ENCODE measurements at regions of chr4 and their contacts with region 1.

Region 1: DNA sequence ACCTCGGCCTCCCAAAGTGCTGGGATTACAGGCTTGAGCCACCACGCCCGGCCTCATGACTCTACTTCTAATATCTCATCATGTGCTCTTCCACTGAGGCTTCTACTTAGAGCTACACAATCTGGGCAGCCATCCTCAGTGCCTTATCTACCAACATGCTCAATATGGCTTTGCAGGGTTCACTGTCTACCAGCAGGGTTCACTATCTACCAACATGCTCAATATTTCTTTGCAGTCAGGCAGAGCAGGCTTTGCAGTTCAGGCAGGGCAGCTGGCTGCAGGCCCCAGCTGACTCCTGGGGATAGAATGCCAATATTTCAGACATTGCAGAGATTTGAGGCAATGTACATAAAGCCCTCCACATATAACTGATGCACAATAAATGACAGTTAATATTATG is 47.5 kb downstream of the PKD2 start:
- DNase-seq: peak; percentile 70
- ATAC-seq: peak; percentile 100
- H3K4me3 ChIP-seq: no peak overlapping the region
- H3K27ac ChIP-seq: no peak overlapping the region
- H3K4me1 ChIP-seq: peaks cover 6% of the 10 kb centered on the region
- H3K27me3 ChIP-seq: no peaks in the 10 kb centered on the region
- CTCF ChIP-seq: peak; percentile 93
- EP300 ChIP-seq: no peak
- POLR2A ChIP-seq: no peak
- RAD21 ChIP-seq: peak; percentile 95

Region 2: DNA sequence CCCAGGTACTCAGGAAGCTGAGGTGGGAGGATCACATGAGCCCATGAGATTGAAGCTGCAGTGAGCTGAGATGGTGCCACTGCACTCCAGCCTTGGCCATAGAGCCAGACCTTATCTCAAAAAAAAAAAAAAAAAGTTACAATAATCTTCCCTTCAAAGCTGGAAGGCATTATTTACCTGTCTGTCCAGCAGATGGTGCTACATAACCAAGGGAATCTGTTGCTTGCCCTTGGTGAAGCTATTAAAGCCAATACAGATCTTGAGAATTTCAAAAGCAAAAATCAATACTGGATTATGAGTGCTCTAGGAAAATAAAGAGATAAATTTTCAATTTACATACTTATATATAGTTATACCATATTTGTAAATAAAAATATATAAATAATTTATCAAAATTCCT is 21.6 kb before region 1 on chr4:
- CTCF ChIA-PET with region 1: no interaction called
- POLR2A ChIA-PET with region 1: no interaction called
- in situ Hi-C with region 1: no loop called
- intact Hi-C with region 1: loop called (anchors 1 kb)
- DNase-seq: peak; percentile 71
- ATAC-seq: peak; percentile 61
- H3K4me3 ChIP-seq: no peak overlapping the region
- H3K27ac ChIP-seq: no peak overlapping the region
- H3K4me1 ChIP-seq: no peaks in the 10 kb centered on the region
- H3K27me3 ChIP-seq: no peaks in the 10 kb centered on the region
- CTCF ChIP-seq: peak; percentile 73
- EP300 ChIP-seq: no peak
- POLR2A ChIP-seq: no peak
- RAD21 ChIP-seq: peak; percentile 69; the same call in 1 of the 2 replicates

Region 3: DNA sequence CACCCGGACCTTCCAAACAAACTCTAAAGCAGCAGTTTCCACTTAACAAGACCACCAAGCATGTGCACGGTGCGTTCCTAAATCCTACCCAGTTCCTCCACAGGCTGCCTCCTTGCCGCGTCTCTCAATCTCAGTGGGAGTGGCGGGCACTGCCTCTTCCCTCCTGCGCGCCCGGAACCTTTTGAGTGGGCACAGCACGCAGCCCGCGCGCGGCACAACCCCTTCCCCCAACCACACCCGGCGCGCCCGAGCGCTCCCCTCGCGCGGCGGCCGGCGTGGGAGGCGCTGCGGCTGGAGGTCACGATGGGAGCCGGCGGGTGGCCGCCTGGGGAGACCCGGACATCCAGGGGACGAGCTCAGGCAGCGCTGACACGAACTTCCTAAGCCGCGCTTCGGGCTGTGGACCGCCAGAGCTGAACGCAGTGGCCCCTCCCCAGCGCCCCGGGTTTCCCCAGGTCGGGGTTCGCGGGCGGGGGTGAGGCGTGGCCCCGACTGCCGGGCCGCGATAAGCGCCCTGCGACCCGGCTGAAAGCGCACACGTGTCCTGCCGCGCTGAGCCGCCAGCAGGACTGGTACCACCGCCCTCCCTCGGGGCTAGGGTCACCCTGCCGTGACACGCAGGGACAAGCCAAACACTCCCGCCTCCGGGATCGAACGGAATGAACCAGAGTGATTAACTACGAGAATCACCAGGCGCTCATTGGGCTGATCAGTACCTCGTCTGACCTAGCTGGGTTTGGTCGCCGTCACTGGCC is 103.8 kb after region 1 on chr4 and contains the start of gene ABCG2:
- CTCF ChIA-PET with region 1: no interaction called
- POLR2A ChIA-PET with region 1: no interaction called
- in situ Hi-C with region 1: no loop called
- intact Hi-C with region 1: loop called (anchors 2 kb)
- DNase-seq: peak; percentile 44
- ATAC-seq: peak; percentile 88
- H3K4me3 ChIP-seq: peak within 1 kb of the TSS; percentile 49 to 82 (median 75)
- H3K27ac ChIP-seq: peak within 1 kb of the TSS; percentile 67
- H3K4me1 ChIP-seq: peaks cover 36% of the 10 kb centered on the region
- H3K27me3 ChIP-seq: no peaks in the 10 kb centered on the region
- CTCF ChIP-seq: no peak
- EP300 ChIP-seq: no peak
- POLR2A ChIP-seq: peak; percentile 42 to 45; a peak in 2 of 4 replicates
- RAD21 ChIP-seq: peak; percentile 14; the same call in 1 of the 2 replicates
- total RNA-seq, gene ABCG2: 13.2 and 15.7 TPM in 2 replicates

Region 4: GRCh38 chr4:89572224-89572858 is 1517.4 kb after region 1 on chr4:
- CTCF ChIA-PET with region 1: no interaction called
- POLR2A ChIA-PET with region 1: no interaction called
- in situ Hi-C with region 1: no loop called
- intact Hi-C with region 1: no loop called
- DNase-seq: no peak
- ATAC-seq: no peak
- H3K4me3 ChIP-seq: no peak overlapping the region
- H3K27ac ChIP-seq: no peak overlapping the region
- H3K4me1 ChIP-seq: no peaks in the 10 kb centered on the region
- H3K27me3 ChIP-seq: no peaks in the 10 kb centered on the region
- CTCF ChIP-seq: no peak
- EP300 ChIP-seq: no peak
- POLR2A ChIP-seq: no peak
- RAD21 ChIP-seq: no peak

Measured in HepG2 (cell line).